Colonic mucosa (tissue), 4 donors: ENCODE measurements at regions of chr6 and their contacts with region 1.

Region 1: GRCh38 chr6:132483779-132484679 is 28.9 kb downstream of the STX7 start:
- DNase-seq: peak; percentile 49
- H3K4me3 ChIP-seq: no peak overlapping the region
- H3K27ac ChIP-seq: no peak overlapping the region
- H3K4me1 ChIP-seq: no peaks in the 10 kb centered on the region
- H3K27me3 ChIP-seq: no peaks in the 10 kb centered on the region
- CTCF ChIP-seq: peak; percentile 51

Region 2: GRCh38 chr6:132279592-132280139 is 204.4 kb before region 1 on chr6:
- intact Hi-C with region 1: loop called (anchors 2 kb)
- DNase-seq: peak; percentile 74
- H3K4me3 ChIP-seq: no peak overlapping the region
- H3K27ac ChIP-seq: no peak overlapping the region
- H3K4me1 ChIP-seq: no peaks in the 10 kb centered on the region
- H3K27me3 ChIP-seq: no peaks in the 10 kb centered on the region
- CTCF ChIP-seq: peak; percentile 90

Region 3: GRCh38 chr6:132300323-132300949 is 183.6 kb before region 1 on chr6:
- intact Hi-C with region 1: loop called (anchors 5 kb)
- DNase-seq: peak; percentile 29
- H3K4me3 ChIP-seq: no peak overlapping the region
- H3K27ac ChIP-seq: no peak overlapping the region
- H3K4me1 ChIP-seq: no peaks in the 10 kb centered on the region
- H3K27me3 ChIP-seq: no peaks in the 10 kb centered on the region
- CTCF ChIP-seq: peak; percentile 49

Region 4: DNA sequence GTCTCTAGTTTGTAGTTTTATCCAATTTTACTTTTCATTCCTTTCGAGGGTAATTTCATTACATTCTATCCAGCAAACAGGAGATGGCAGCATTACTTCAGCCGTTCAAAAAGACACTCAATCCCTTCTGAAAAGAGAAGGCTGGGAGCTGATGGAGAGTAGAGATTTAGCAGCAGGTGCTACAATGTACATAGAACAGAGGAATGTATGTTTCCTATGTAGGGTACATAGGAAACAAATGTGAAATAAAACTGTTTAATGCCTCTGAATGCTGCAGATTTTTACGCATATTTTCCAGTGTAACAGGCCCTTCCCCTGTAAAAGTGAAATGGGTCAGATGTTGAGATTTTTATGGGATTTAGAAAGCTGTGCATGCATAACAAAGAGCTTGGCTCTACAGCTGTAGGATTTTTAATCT is 346.3 kb after region 1 on chr6:
- intact Hi-C with region 1: no loop called
- DNase-seq: no peak
- H3K4me3 ChIP-seq: no peak overlapping the region
- H3K27ac ChIP-seq: no peak overlapping the region
- H3K4me1 ChIP-seq: no peaks in the 10 kb centered on the region
- H3K27me3 ChIP-seq: no peaks in the 10 kb centered on the region
- CTCF ChIP-seq: no peak